GM13977 (cell line): ENCODE measurements at regions of chr13 and their contacts with region 1.

Region 1: DNA sequence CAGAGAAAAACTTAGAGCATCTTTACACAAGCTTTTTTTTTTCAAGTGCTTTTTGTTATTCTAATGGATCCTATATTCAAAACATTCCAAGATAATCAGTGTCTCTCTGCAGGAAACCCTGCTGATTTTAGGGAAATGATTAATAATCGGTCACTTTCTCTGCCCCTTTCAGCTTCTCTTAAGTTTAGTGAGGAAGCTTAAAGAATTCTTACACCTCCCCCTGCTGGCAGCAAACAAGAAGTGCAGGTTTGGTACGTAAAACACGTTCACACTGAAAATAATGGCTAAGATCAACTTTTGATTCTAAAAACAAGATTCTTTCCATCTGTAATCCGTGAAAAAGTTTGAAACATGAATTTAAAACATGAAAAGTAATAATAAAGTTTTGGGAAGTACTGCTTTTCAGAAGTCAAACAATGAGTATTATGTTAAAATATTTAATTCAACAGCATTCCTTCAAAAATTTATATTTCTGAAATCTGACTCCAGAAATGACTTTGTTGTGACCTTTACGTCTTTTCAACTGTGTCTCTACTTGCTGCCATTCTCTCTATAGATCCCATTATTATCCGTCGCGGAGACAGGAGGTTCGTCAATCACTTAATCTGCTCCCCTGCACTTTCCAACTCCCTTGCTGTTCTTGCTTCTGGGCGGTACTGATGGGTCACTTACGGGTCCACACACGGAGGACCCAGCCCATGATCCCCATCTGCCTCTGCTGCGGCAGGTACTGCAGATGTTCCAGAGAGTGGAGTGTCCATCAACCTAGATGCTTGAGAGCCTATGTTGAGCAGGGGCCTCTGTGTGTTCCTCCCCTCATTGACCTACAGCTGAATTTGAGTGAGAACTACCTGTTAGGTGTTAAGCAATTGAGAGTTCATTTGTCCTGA is 203.1 kb upstream of the EDNRB start:
- DNase-seq: peak; percentile 33
- CTCF ChIP-seq: peak; percentile 85

Region 2: DNA sequence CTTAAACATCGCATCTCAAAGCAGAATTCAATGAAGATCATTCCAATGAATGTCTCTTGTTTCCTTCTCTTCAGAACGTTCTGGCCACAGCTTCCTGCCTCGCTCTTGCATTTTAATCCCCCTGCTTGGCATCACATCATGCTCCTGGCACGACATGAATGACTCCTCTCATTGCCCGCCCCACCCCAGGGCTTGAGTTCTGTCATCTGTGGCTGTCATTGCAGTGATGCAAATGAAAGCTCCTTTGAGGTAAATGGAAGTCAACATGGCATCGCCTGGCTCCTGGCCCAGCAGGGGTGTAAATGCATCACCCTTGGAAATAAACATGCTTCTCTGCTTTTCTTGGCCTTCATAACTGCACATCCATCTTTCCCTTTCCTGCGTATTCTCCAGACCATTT is 537.6 kb before region 1 on chr13:
- in situ Hi-C with region 1: loop called (anchors 25 kb)
- DNase-seq: no peak
- CTCF ChIP-seq: no peak

Region 3: DNA sequence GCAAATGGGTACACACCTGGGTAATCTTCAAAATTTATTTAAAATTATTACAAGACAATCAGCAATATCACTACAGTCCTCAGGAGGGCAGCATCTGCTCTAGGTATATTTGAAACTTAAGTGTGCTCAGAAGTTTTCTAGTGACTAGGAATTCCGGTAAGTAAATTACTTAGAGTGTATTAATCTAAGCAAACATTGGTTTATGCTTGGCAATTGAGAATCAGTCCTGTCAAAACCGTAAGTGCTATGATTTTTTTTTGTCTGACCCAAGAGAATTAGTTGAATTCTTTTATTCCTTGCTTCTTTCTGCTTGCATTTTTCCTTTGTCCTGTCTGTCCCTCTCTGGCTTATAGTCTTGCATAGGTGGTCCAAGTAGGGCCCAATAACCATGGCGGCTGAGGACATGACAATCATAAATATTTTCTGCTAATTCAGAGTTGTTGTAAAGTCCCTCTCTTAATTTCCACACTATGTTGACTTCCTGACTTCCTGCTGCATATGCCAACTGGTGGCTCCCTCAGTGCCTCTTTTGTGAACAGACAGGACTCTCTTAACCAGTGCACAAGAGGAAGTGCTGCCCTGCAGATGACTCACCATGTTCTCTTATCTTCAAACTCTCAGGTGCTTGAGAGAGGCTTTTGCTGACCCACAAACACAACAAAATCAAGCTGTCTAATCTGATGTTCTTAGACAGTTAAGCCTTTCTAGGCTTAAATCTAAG is 342.0 kb before region 1 on chr13:
- in situ Hi-C with region 1: loop called (anchors 10 kb)
- DNase-seq: peak; percentile 46
- CTCF ChIP-seq: peak; percentile 63